ENCODE measurements at regions of chr19 and their contacts with region 1.

Region 1: GRCh38 chr19:12736995-12737834 is at the start of gene GET3:
- DNase-seq: peak; percentile 69 to 89 (median 85)
- H3K4me3 ChIP-seq: peak within 1 kb of the TSS; percentile 81
- H3K4me3 Mint-ChIP-seq: peak within 1 kb of the TSS; percentile 87 to 100 (median 99)
- H3K27ac ChIP-seq: peak within 1 kb of the TSS; percentile 95
- H3K27ac Mint-ChIP-seq: peak within 1 kb of the TSS; percentile 93 to 99 (median 97)
- H3K4me1 ChIP-seq: peaks cover 37% of the 10 kb centered on the region
- H3K4me1 Mint-ChIP-seq: peaks cover 36 to 48% (median 42%) of the 10 kb centered on the region in 3 donors
- H3K27me3 ChIP-seq: no peaks in the 10 kb centered on the region
- H3K27me3 Mint-ChIP-seq: no peaks in the 10 kb centered on the region
- total RNA-seq, gene GET3: 96.9 to 101 TPM

Region 2: GRCh38 chr19:12656899-12657571 is 80.2 kb before region 1 on chr19:
- CTCF ChIA-PET with region 1: no interaction called
- POLR2A ChIA-PET with region 1: no interaction called
- DNase-seq: no peak
- H3K4me3 ChIP-seq: no peak overlapping the region
- H3K4me3 Mint-ChIP-seq: no peak overlapping the region
- H3K27ac ChIP-seq: no peak overlapping the region
- H3K27ac Mint-ChIP-seq: peak overlapping the region in 1 of 8 donors; percentile 74
- H3K4me1 ChIP-seq: no peaks in the 10 kb centered on the region
- H3K4me1 Mint-ChIP-seq: peaks cover 0 to 1% (median 0%) of the 10 kb centered on the region in 3 donors
- H3K27me3 ChIP-seq: no peaks in the 10 kb centered on the region
- H3K27me3 Mint-ChIP-seq: no peaks in the 10 kb centered on the region

Region 3: DNA sequence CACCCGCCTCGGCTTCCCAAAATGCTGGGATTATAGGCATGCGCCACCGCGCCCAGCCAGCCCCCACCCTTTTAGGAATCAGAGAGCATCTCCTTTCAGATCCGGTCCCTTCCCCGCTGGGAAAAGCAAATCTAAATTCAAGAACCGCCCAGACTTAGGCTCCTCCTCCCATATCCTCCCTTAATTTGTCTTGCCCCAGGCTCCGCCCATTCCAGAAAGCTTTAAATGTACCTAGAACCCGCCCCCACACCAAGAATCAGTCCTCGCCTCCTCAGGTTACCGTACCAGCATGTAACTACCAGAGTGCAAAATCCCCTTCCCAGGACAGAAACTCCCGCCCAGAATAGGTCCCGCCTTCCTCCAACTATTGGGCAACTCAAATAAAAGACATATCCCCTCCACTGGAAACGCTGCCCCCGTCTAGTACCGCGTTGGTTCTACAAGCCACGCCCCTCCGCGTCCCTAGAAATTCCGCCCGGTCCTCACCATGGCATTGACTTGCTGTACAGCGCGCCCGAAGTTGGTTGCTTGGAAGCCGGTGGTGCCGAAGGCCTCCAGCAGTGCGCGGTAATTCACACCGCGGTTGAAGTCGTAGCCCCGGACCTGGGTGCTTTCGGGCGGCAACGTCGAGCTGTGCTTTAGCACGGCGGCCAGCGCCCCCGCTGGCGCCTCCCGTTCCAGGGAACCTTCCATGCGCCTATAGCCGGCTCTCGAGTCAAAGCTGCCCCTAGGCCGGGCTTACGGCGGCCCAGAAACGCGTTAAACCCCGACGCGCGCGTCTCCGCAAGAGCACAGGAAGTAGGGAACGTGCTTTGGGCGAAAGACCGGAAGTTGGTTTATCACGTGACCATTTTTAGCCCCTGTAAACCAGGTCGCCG is 55.9 kb before region 1 on chr19 and contains the start of gene DHPS:
- CTCF ChIA-PET with region 1: interaction called, 3 read pairs
- POLR2A ChIA-PET with region 1: interaction called, 13 read pairs
- DNase-seq: peak; percentile 84 to 96 (median 91)
- H3K4me3 ChIP-seq: peak within 1 kb of the TSS; percentile 87
- H3K4me3 Mint-ChIP-seq: peak within 1 kb of the TSS; percentile 91 to 98 (median 95)
- H3K27ac ChIP-seq: peak within 1 kb of the TSS; percentile 84
- H3K27ac Mint-ChIP-seq: peak within 1 kb of the TSS; percentile 93 to 97 (median 96)
- H3K4me1 ChIP-seq: peaks cover 14% of the 10 kb centered on the region
- H3K4me1 Mint-ChIP-seq: peaks cover 16 to 34% (median 26%) of the 10 kb centered on the region in 3 donors
- H3K27me3 ChIP-seq: no peaks in the 10 kb centered on the region
- H3K27me3 Mint-ChIP-seq: peaks cover 0 to 4% of the 10 kb centered on the region in 2 donors
- total RNA-seq, gene DHPS: 113 to 116 TPM

Region 4: DNA sequence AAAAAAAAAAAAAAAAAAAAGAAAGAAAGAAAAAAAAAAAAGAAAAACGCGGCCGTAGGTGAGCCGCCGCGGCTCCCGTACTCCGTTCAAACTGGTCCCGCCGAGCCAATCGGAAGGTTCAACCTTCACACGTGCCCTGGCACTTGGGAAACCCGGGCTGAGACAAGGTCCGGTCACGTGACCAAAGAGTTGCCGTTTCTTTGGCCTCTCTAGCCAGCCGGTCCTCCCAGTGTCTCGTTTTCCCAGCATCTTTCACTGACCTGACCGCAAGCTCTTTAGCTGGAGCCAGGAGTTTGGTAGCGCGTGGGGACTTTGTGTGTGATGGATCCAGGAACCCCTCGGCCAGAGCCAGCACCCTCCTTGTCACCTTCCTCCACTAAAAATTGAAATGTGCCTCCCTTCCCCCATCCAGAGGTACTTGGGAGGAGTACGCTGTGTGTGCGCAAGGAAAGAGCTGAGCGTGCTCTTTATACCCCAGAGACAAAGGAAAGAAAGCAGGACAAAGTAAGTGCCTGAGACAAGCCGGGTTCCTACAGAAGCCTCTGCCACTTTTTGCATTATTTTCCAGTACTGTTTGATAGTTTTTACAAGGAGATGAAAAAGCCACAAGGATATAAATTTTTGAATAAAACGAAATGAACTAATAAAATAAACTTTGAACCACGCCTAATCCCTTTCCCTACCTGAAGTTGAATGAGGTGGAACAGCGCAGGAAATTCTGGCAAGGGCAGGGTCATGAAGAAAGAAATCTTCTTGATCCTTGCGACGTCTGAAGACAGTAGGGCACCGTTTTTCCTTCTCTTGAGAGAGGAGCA is 14.4 kb before region 1 on chr19:
- CTCF ChIA-PET with region 1: interaction called, 25 read pairs
- POLR2A ChIA-PET with region 1: interaction called, 38 read pairs
- DNase-seq: peak; percentile 90 to 97 (median 92)
- H3K4me3 ChIP-seq: peak overlapping the region; percentile 98
- H3K4me3 Mint-ChIP-seq: peak overlapping the region; percentile 90 to 95 (median 94)
- H3K27ac ChIP-seq: peak overlapping the region; percentile 60
- H3K27ac Mint-ChIP-seq: peak overlapping the region; percentile 85 to 96 (median 94)
- H3K4me1 ChIP-seq: peaks cover 17% of the 10 kb centered on the region
- H3K4me1 Mint-ChIP-seq: peaks cover 35 to 46% (median 38%) of the 10 kb centered on the region in 3 donors
- H3K27me3 ChIP-seq: no peaks in the 10 kb centered on the region
- H3K27me3 Mint-ChIP-seq: peaks cover 0 to 4% of the 10 kb centered on the region in 2 donors

Region 5: DNA sequence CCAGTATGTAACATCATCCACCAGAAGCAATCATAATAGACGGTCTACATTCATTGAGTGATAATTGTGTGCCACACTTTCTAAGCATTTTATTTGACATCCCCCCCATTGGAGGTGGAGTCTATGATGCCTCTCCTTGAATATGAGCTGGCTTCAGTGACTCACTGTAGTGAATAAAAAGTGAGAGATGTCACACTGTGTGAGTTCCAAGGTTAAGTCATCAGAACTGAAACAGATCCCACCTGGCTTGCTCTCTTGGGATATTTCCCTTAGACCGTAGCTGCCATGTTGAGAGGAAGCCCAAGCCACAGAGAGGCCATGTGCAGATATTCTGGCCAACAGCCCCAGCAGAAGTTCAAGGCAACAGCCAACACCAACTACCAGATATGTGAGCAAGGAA is 84.5 kb after region 1 on chr19:
- CTCF ChIA-PET with region 1: no interaction called
- POLR2A ChIA-PET with region 1: no interaction called
- DNase-seq: no peak
- H3K4me3 ChIP-seq: no peak overlapping the region
- H3K4me3 Mint-ChIP-seq: no peak overlapping the region
- H3K27ac ChIP-seq: no peak overlapping the region
- H3K27ac Mint-ChIP-seq: peak overlapping the region in 1 of 8 donors; percentile 1
- H3K4me1 ChIP-seq: peaks cover 5% of the 10 kb centered on the region
- H3K4me1 Mint-ChIP-seq: peaks cover 4 to 9% (median 4%) of the 10 kb centered on the region in 3 donors
- H3K27me3 ChIP-seq: peaks cover 15% of the 10 kb centered on the region
- H3K27me3 Mint-ChIP-seq: peaks cover 19 to 23% of the 10 kb centered on the region in 2 donors

Region 6: GRCh38 chr19:13051267-13052165 is 314.3 kb after region 1 on chr19:
- CTCF ChIA-PET with region 1: no interaction called
- POLR2A ChIA-PET with region 1: no interaction called
- DNase-seq: no peak
- H3K4me3 ChIP-seq: peak overlapping the region; percentile 17
- H3K4me3 Mint-ChIP-seq: peak overlapping the region in 3 of 7 donors; percentile 48 to 76 (median 72)
- H3K27ac ChIP-seq: no peak overlapping the region
- H3K27ac Mint-ChIP-seq: peak overlapping the region in 1 of 8 donors; percentile 96
- H3K4me1 ChIP-seq: peaks cover 14% of the 10 kb centered on the region
- H3K4me1 Mint-ChIP-seq: peaks cover 4 to 7% (median 5%) of the 10 kb centered on the region in 3 donors
- H3K27me3 ChIP-seq: no peaks in the 10 kb centered on the region
- H3K27me3 Mint-ChIP-seq: peaks cover 14 to 23% of the 10 kb centered on the region in 2 donors

Measured in CD8-positive, alpha-beta memory T cell (primary cell).